Dendritic cell treated with granulocyte-macrophage colony-stimulating factor and Interleukin-4, amounts not matched to agents 40 ng/mL and 50 ng/mL, for 4 days (primary cell): ENCODE measurements at regions of chr6 and their contacts with region 1.

Region 1: DNA sequence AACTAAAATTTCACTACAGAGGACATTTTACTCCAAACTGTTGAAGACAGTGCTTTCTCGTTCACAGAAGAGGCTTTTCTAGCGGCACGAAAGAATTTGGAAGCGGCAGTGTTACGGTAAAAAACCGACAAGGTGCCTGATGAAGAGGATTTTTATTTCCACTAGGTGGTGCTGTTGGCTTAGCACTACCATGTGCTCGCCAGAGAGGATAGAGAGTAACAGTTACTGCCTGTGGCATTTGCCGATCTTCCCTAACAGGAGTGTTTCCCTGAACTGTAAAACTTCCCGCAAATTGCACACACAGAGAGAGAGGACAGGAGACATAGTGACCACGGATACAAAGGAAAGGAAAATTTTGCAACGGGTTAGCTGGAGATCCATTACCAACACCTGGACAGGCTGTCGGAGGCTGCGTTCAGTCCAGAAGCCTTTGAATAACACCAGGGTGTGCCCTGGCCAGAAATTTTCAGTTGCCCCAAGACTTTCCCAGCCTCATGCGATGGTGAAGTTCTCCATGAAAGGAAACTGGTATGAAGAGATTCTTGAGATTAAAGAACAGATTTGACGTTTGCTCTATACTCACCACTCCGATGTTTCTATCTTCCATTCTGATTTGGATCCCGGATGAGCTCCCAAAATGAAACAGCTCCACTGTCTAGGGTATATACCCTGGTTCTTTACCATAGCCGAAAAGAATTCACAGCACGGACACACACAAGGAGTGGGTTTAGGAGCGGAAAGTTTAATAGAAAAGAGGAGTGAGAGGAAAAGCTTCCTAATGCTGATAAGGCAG is 48.1 kb downstream of the HLA-DPB1 start:
- H3K4me3 Mint-ChIP-seq: no peak overlapping the region
- H3K27ac Mint-ChIP-seq: no peak overlapping the region
- H3K4me1 Mint-ChIP-seq: no peaks in the 10 kb centered on the region
- H3K27me3 Mint-ChIP-seq: peaks cover 27% of the 10 kb centered on the region

Region 2: GRCh38 chr6:33147807-33148666 is 24.1 kb after region 1 on chr6:
- intact Hi-C with region 1: loop called (anchors 1 kb)
- H3K4me3 Mint-ChIP-seq: no peak overlapping the region
- H3K27ac Mint-ChIP-seq: no peak overlapping the region
- H3K4me1 Mint-ChIP-seq: peaks cover 14% of the 10 kb centered on the region
- H3K27me3 Mint-ChIP-seq: peaks cover 11% of the 10 kb centered on the region

Region 3: DNA sequence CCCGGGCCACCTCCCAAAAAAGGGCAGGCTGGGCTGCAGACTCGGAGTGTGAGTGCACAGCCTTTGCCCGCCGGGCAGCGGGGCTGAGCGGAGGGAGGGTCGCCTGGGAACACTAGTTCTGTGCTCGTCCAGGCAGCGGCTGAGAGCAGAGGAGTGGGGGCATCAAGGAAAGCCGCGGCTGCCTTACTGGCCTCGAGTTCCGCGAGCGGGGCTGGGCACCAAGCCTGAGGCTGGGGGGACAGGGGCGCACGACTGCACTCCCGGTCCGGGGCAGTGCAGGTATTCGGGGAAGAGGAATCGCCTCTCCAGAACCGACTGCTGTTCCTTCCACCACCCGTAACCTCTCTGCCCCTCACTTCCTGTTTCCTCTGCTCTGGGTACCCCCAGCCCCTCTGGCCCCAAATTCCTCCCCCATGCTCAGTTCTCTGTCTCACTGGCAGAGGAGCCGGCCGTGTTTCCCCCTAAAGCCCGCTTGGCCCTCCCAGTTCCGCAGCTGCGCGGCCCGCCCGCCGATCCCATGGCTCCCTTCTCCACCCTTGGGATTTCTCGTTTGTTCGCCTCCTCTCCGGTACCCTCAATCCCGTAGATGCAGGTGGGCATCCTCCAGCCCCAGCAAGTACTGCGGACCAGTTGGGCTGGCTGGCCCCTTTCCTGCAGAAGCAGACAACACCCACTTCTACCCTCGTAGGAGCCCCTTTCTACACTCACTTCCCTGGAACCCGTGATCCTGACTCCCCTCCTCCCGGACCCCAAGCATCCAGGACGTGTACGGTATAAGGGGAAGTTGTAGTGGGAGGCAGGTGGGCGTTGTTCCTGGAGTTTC is 89.4 kb after region 1 on chr6:
- intact Hi-C with region 1: no loop called
- H3K4me3 Mint-ChIP-seq: peak overlapping the region; percentile 77
- H3K27ac Mint-ChIP-seq: peak overlapping the region; percentile 65
- H3K4me1 Mint-ChIP-seq: peaks cover 47% of the 10 kb centered on the region
- H3K27me3 Mint-ChIP-seq: peaks cover 54% of the 10 kb centered on the region

Region 4: GRCh38 chr6:33812669-33813068 is 688.7 kb after region 1 on chr6:
- intact Hi-C with region 1: no loop called
- H3K4me3 Mint-ChIP-seq: no peak overlapping the region
- H3K27ac Mint-ChIP-seq: no peak overlapping the region
- H3K4me1 Mint-ChIP-seq: peaks cover 3% of the 10 kb centered on the region
- H3K27me3 Mint-ChIP-seq: peaks cover 64% of the 10 kb centered on the region

Region 5: GRCh38 chr6:34067814-34068213 is 943.9 kb after region 1 on chr6:
- intact Hi-C with region 1: no loop called
- H3K4me3 Mint-ChIP-seq: no peak overlapping the region
- H3K27ac Mint-ChIP-seq: no peak overlapping the region
- H3K4me1 Mint-ChIP-seq: no peaks in the 10 kb centered on the region
- H3K27me3 Mint-ChIP-seq: peaks cover 8% of the 10 kb centered on the region